ENCODE measurements at regions of chr15 and their contacts with region 1.

Region 1: GRCh38 chr15:91302588-91303439 is 202.8 kb downstream of the SV2B start:
- DNase-seq: peak; percentile 56 to 71 (median 57)
- ATAC-seq: peak; percentile 85
- H3K4me3 ChIP-seq: no peak overlapping the region
- H3K27ac ChIP-seq: no peak overlapping the region
- H3K4me1 ChIP-seq: no peaks in the 10 kb centered on the region
- H3K27me3 ChIP-seq: peaks cover 2 to 9% of the 10 kb centered on the region in 2 experiments; a peak in 2 of 5 replicates
- CTCF ChIP-seq: peak; percentile 70 to 87 (median 73)
- EP300 ChIP-seq: no peak
- POLR2A ChIP-seq: no peak
- RAD21 ChIP-seq: peak; percentile 92 to 95

Region 2: DNA sequence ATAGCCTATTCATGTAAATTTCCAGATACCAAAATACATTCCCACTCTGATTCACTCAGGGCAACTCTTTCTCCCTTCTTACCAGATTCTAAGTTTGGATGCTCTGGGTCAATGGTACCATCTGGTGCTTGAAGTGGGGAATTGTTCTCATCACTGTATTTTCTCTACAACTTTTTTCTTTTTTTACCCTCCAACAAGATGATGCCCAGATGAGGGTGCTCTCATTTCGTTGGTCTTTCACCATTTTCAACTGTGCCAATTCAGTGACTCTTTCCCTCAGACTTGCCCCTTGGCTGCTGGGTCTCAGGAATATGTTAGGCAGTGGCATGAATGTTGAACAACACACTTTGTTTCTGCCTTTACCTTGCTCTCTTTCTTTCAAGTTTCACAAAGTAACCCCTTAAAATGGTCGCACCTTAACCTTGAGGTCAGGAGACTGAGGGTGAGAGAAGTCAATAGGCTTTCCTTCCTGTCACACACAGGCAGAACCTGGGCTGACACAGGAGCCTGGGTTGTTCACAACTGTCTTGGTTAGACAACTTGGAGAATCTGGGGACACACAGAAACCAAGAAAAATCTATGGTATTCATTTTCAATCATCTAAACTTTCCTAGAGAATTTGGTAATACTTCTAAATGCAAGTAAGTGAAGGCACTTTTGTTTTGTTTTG is 220.0 kb after region 1 on chr15:
- CTCF ChIA-PET with region 1: interaction called, 21 read pairs
- POLR2A ChIA-PET with region 1: interaction called, 4 read pairs
- in situ Hi-C with region 1: no loop called
- intact Hi-C with region 1: loop called (anchors 1 kb)
- DNase-seq: peak in 1 of 4 experiments; percentile 15
- ATAC-seq: no peak
- H3K4me3 ChIP-seq: no peak overlapping the region
- H3K27ac ChIP-seq: no peak overlapping the region
- H3K4me1 ChIP-seq: no peaks in the 10 kb centered on the region
- H3K27me3 ChIP-seq: peaks cover 0 to 4% of the 10 kb centered on the region in 2 experiments; a peak in 1 of 5 replicates
- CTCF ChIP-seq: peak; percentile 28 to 80 (median 45); a peak in 4 of 6 replicates
- EP300 ChIP-seq: no peak
- POLR2A ChIP-seq: no peak
- RAD21 ChIP-seq: peak; percentile 82 to 84

Region 3: GRCh38 chr15:91603384-91604080 is 300.7 kb after region 1 on chr15:
- CTCF ChIA-PET with region 1: no interaction called
- POLR2A ChIA-PET with region 1: no interaction called
- in situ Hi-C with region 1: no loop called
- intact Hi-C with region 1: loop called (anchors 10 kb)
- DNase-seq: no peak
- ATAC-seq: no peak
- H3K4me3 ChIP-seq: no peak overlapping the region
- H3K27ac ChIP-seq: no peak overlapping the region
- H3K4me1 ChIP-seq: no peaks in the 10 kb centered on the region
- H3K27me3 ChIP-seq: no peaks in the 10 kb centered on the region; a peak in 1 of 5 replicates
- CTCF ChIP-seq: no peak
- EP300 ChIP-seq: no peak
- POLR2A ChIP-seq: no peak
- RAD21 ChIP-seq: no peak

Region 4: GRCh38 chr15:91852741-91853510 is 550.1 kb after region 1 on chr15:
- CTCF ChIA-PET with region 1: interaction called, 5 read pairs
- POLR2A ChIA-PET with region 1: no interaction called
- in situ Hi-C with region 1: no loop called
- intact Hi-C with region 1: loop called (anchors 2 kb)
- DNase-seq: peak; percentile 64 to 88 (median 86)
- ATAC-seq: peak; percentile 98
- H3K4me3 ChIP-seq: peak overlapping the region; percentile 47
- H3K27ac ChIP-seq: no peak overlapping the region
- H3K4me1 ChIP-seq: peaks cover 0 to 17% of the 10 kb centered on the region in 2 experiments; a peak in 2 of 5 replicates
- H3K27me3 ChIP-seq: peaks cover 0 to 5% of the 10 kb centered on the region in 2 experiments; a peak in 3 of 5 replicates
- CTCF ChIP-seq: peak; percentile 54 to 82 (median 67); a peak in 5 of 6 replicates
- EP300 ChIP-seq: no peak
- POLR2A ChIP-seq: no peak
- RAD21 ChIP-seq: peak; percentile 59 to 64

Region 5: DNA sequence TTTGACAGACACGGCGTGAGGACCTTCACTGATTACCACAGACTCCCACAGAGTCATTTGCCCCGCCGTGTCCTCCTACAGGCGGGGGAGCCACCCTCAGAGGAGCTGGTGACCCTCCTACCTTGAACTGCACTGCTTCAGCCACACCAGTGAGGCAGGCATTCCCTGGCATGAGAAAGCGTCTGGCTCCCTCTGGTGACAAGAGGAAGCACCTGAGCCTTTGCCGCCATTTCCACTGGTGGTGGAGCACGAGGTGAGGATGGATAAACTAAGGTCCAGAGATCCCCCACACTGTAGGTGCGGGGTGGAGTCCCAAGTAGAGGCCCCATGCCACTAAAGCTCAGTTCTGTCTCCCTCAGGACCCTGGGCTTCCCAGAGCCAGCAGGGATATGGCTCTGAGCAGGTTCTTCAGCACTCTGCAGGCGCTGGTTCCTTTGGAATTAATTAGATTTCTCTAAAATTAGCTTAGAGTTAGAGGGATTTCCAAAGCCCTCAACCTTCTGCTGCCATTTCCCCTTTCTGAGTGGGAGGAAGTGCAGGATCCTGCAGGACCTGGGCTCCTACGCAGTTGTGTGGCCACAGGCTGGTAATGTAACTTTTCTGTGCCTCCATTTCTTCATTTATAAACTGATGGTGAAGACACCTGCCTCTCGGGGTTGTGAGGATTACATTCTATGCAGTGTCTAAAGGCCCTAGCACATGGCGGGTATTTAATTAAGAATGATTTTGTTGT is 774.7 kb after region 1 on chr15:
- CTCF ChIA-PET with region 1: interaction called, 4 read pairs
- POLR2A ChIA-PET with region 1: no interaction called
- in situ Hi-C with region 1: loop called (anchors 5 kb)
- intact Hi-C with region 1: loop called (anchors 2 kb)
- DNase-seq: peak; percentile 55 to 59 (median 57)
- ATAC-seq: peak; percentile 88
- H3K4me3 ChIP-seq: no peak overlapping the region
- H3K27ac ChIP-seq: no peak overlapping the region
- H3K4me1 ChIP-seq: no peaks in the 10 kb centered on the region
- H3K27me3 ChIP-seq: peaks cover 0 to 36% of the 10 kb centered on the region in 2 experiments; a peak in 3 of 5 replicates
- CTCF ChIP-seq: peak; percentile 78 to 80 (median 79)
- EP300 ChIP-seq: no peak
- POLR2A ChIP-seq: no peak
- RAD21 ChIP-seq: peak; percentile 81 to 85

Measured in K562 (cell line).